Right cardiac atrium (tissue), 5 donors: ENCODE measurements at regions of chr10 and their contacts with region 1.

Region 1: DNA sequence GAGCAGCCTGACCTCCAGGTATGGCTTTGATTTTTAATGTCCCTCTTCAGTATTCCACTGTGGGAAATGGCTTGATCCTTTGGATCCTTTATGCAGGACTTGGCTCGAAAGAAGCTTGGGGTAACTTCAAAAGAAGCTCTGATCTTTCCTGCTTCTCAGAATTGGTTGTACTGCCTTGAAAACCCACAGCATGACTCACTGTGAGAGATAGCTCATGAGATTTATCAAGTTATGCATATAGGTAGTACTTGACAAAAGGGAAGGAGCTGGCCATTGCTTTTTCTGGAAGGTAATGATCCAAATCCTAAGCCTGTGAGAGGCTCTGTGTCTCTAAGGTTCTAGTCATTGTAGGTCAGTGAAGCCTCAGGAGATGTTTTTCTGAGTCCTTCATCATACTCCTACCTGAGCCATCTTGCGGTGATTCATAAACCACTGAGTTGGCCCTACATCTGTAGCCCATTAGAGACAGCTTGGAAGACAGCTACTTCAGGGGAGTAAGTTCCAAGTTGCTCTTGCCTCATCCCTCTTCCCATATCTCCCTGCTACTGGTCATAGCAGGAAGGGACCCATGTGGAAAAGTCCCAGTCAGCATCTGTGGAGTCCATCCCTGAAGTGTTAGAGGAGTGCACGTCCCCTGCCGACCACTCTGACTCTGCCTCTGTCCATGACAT is 36.7 kb upstream of the NFKB2 start:
- DNase-seq: no peak
- ATAC-seq: no peak
- H3K4me3 ChIP-seq: no peak overlapping the region
- H3K27ac ChIP-seq: no peak overlapping the region
- H3K4me1 ChIP-seq: no peaks in the 10 kb centered on the region
- H3K27me3 ChIP-seq: no peaks in the 10 kb centered on the region

Region 2: GRCh38 chr10:102175415-102175814 is 183.4 kb before region 1 on chr10:
- intact Hi-C with region 1: loop called in 1 of 4 experiments (anchors 5 kb)
- DNase-seq: no peak
- ATAC-seq: no peak
- H3K4me3 ChIP-seq: no peak overlapping the region
- H3K27ac ChIP-seq: no peak overlapping the region
- H3K4me1 ChIP-seq: no peaks in the 10 kb centered on the region
- H3K27me3 ChIP-seq: no peaks in the 10 kb centered on the region

Region 3: GRCh38 chr10:102641880-102642735 is 283.3 kb after region 1 on chr10:
- intact Hi-C with region 1: no loop called
- DNase-seq: peak; percentile 99 to 100 (median 100)
- ATAC-seq: peak; percentile 79 to 86
- H3K4me3 ChIP-seq: peak overlapping the region; percentile 93
- H3K27ac ChIP-seq: peak overlapping the region; percentile 96
- H3K4me1 ChIP-seq: no peaks in the 10 kb centered on the region
- H3K27me3 ChIP-seq: no peaks in the 10 kb centered on the region